Esophagus muscularis mucosa (tissue), 4 donors: ENCODE measurements at regions of chr12 and their contacts with region 1.

Region 1: DNA sequence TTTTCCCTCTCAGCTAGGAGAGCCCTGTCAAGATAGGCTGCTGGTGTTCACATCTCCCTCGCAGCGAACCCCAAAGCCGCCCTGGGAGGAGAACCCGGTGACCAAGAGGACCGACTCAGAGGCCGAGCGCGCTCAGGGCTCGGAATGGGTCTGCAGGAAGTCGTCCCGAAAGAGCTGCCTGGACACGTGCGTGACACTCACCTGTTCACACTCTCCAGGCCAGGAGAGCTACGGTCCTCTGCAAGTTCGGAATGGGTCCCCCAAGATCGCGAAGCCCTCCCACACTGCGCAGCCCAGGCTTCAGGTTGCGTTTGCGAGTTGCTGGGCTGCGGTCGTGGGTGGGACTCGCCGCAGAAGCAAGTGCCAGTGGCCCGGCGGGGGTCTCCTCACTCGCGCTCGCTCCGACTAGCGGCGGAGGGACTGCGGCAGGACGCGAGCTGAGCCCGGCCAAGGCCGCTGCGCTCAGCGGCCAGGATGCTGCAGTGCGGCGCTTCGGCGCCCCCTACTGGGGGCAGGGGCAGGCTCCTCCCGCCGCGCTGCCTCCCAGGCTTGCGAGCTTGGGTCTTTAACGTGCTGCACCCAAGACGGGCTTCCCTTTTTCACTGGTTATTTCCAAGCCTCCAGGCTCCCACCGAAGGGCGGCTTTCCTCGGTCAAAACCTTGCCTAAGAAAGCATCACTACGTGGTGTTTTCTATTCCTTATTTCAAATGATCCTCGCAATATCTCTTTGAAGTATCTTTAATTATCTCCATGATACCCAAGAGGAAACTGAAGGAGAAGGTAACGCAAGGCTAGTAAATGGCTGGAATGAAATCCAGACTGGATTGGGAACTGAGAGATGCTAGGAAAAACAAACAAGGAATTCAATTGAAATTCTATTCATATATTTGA is at the start of gene RERG:
- DNase-seq: no peak
- H3K4me3 ChIP-seq: peak within 1 kb of the TSS; percentile 54 to 70 (median 60)
- H3K27ac ChIP-seq: peak within 1 kb of the TSS; percentile 60 to 66 (median 63)
- H3K4me1 ChIP-seq: peaks cover 11 to 19% (median 14%) of the 10 kb centered on the region in 4 donors
- H3K27me3 ChIP-seq: peaks cover 0 to 4% (median 0%) of the 10 kb centered on the region in 4 donors
- CTCF ChIP-seq: peak; percentile 91 to 100 (median 99)
- EP300 ChIP-seq: no peak
- POLR2A ChIP-seq: no peak
- total RNA-seq, gene RERG: 5.0 to 15.4 (median 12.7) TPM

Region 2: GRCh38 chr12:15001733-15002382 is 219.4 kb before region 1 on chr12:
- intact Hi-C with region 1: loop called (anchors 5 kb)
- DNase-seq: no peak
- H3K4me3 ChIP-seq: peak overlapping the region in 3 of 4 donors; percentile 7 to 24 (median 15)
- H3K27ac ChIP-seq: peak overlapping the region; percentile 53 to 73 (median 60)
- H3K4me1 ChIP-seq: peaks cover 9 to 30% (median 17%) of the 10 kb centered on the region in 4 donors
- H3K27me3 ChIP-seq: no peaks in the 10 kb centered on the region
- CTCF ChIP-seq: no peak
- EP300 ChIP-seq: no peak
- POLR2A ChIP-seq: no peak

Region 3: DNA sequence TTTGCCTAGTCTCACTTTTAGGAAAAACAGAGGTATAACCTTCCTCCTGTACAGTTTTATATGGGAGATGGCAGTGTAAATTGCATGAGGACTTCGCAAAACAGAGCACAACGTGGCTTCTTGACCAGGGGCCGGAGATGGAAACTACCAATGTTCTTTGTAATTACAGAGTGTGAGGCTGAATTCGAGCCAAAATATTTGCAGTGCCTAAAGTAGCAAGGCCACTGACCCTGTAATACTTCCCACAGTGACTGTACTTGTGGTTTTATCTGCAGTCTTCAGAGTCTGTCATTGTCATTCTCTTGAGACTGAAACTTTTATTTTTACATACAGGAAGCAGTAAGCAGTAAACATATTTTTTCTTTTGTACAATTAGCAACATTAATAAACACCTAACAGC is 98.9 kb before region 1 on chr12:
- intact Hi-C with region 1: no loop called
- DNase-seq: no peak
- H3K4me3 ChIP-seq: no peak overlapping the region
- H3K27ac ChIP-seq: no peak overlapping the region
- H3K4me1 ChIP-seq: no peaks in the 10 kb centered on the region
- H3K27me3 ChIP-seq: no peaks in the 10 kb centered on the region
- CTCF ChIP-seq: no peak
- EP300 ChIP-seq: no peak
- POLR2A ChIP-seq: no peak

Region 4: GRCh38 chr12:15151161-15152120 is 69.8 kb before region 1 on chr12:
- intact Hi-C with region 1: loop called (anchors 1 kb)
- DNase-seq: no peak
- H3K4me3 ChIP-seq: no peak overlapping the region
- H3K27ac ChIP-seq: peak overlapping the region in 2 of 4 donors; percentile 22 to 33
- H3K4me1 ChIP-seq: peaks cover 12 to 53% (median 44%) of the 10 kb centered on the region in 4 donors
- H3K27me3 ChIP-seq: no peaks in the 10 kb centered on the region
- CTCF ChIP-seq: peak; percentile 56 to 65 (median 65)
- EP300 ChIP-seq: no peak
- POLR2A ChIP-seq: no peak

Region 5: DNA sequence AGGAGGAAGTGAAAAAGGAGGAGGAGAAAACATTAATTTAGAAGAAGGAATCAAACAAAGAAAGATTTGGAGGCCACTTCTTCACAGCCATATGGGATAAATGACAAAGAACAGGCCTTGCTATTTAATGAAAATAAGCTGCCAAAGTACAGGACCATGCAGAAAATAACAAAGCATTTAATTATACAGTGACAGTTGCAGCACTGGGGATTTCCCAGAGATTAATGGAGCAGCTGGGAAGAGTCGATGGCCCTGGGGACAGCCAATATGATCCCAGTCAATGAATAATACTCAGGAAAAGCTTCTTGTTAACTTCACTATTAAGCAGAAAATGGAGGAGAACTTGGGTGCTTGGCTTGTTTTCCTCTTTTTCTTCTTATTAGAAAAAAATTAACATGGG is 34.6 kb before region 1 on chr12:
- intact Hi-C with region 1: no loop called
- DNase-seq: no peak
- H3K4me3 ChIP-seq: no peak overlapping the region
- H3K27ac ChIP-seq: peak overlapping the region in 1 of 4 donors; percentile 9
- H3K4me1 ChIP-seq: peaks cover 0 to 23% (median 6%) of the 10 kb centered on the region in 4 donors
- H3K27me3 ChIP-seq: no peaks in the 10 kb centered on the region
- CTCF ChIP-seq: no peak
- EP300 ChIP-seq: no peak
- POLR2A ChIP-seq: no peak

Region 6: GRCh38 chr12:15268927-15269552 is 47.8 kb after region 1 on chr12:
- intact Hi-C with region 1: loop called (anchors 5 kb)
- DNase-seq: no peak
- H3K4me3 ChIP-seq: no peak overlapping the region
- H3K27ac ChIP-seq: no peak overlapping the region
- H3K4me1 ChIP-seq: peaks cover 0 to 5% (median 2%) of the 10 kb centered on the region in 4 donors
- H3K27me3 ChIP-seq: no peaks in the 10 kb centered on the region
- CTCF ChIP-seq: peak; percentile 83 to 85 (median 83)
- EP300 ChIP-seq: no peak
- POLR2A ChIP-seq: no peak

Region 7: DNA sequence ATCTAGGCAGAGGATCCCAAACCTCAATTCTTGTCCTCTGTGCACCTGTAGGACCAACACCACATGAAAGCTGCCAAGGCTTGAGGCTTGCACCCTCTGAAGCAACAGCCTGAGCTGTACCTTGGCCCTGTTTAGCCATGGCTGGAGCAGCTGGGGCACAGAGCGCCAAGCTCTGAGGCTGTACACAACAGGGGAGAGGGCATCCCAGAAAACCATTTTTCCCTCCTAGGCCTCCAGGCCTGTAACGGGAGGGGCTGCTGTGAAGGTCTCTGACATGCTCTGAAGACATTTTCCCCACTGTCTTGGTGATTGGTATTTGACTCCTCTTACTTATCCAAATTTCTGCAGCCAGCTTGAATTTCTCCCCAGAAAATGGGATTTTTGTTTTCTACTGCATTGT is 78.7 kb after region 1 on chr12:
- intact Hi-C with region 1: no loop called
- DNase-seq: no peak
- H3K4me3 ChIP-seq: no peak overlapping the region
- H3K27ac ChIP-seq: no peak overlapping the region
- H3K4me1 ChIP-seq: no peaks in the 10 kb centered on the region
- H3K27me3 ChIP-seq: no peaks in the 10 kb centered on the region
- CTCF ChIP-seq: no peak
- EP300 ChIP-seq: no peak
- POLR2A ChIP-seq: no peak

Region 8: DNA sequence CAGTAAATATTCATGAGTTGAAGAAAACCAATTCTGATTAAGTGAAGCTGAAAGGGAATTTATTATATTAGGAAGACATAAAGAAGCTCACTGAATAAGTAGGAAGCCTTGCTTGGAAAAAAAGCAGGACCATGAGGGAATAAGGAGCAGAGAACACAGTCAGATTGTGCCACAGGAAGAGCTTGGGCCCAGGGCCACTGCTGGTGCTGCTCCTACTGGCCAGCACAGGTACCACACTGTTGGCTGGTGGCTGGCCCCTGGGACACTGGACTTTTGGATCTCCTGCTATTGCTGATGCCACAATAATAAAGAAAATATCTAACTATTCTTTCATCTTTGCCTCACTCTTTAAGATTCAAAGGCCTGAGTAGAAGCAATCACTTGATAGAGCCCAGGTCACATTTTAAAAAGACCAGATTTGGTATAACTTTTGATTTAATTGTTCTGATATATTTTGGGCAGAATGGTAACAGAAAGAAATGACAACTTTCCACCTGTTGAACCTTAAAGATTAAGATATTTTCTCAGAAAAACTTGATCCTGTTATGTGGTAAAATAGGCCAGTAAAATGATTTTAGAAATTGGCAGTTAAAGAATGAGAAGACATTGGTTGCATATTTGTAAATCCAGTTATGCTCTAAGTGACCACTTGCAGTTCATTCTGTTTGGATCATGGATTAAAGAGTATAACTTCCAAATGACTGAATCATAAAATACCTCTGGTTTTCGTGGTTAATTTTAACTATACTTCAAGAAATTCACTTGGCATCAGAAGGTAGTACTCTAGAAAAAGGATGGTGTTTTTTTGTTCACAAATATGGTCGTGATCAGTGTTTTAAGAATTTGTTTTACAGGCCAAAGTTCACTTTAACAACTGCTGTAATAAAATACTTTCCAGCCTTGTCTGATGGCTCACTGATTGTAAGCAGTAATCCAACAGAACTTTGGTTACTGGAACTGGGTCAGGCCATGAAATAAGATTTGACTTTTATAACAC is 758.2 kb after region 1 on chr12:
- intact Hi-C with region 1: no loop called
- DNase-seq: no peak
- H3K4me3 ChIP-seq: no peak overlapping the region
- H3K27ac ChIP-seq: peak overlapping the region; percentile 34 to 61 (median 41)
- H3K4me1 ChIP-seq: peaks cover 26 to 45% (median 36%) of the 10 kb centered on the region in 4 donors
- H3K27me3 ChIP-seq: no peaks in the 10 kb centered on the region
- CTCF ChIP-seq: peak in 2 of 3 experiments; percentile 26 to 56
- EP300 ChIP-seq: no peak
- POLR2A ChIP-seq: no peak